ENCODE measurements at regions of chr19 and their contacts with region 1.

Region 1: DNA sequence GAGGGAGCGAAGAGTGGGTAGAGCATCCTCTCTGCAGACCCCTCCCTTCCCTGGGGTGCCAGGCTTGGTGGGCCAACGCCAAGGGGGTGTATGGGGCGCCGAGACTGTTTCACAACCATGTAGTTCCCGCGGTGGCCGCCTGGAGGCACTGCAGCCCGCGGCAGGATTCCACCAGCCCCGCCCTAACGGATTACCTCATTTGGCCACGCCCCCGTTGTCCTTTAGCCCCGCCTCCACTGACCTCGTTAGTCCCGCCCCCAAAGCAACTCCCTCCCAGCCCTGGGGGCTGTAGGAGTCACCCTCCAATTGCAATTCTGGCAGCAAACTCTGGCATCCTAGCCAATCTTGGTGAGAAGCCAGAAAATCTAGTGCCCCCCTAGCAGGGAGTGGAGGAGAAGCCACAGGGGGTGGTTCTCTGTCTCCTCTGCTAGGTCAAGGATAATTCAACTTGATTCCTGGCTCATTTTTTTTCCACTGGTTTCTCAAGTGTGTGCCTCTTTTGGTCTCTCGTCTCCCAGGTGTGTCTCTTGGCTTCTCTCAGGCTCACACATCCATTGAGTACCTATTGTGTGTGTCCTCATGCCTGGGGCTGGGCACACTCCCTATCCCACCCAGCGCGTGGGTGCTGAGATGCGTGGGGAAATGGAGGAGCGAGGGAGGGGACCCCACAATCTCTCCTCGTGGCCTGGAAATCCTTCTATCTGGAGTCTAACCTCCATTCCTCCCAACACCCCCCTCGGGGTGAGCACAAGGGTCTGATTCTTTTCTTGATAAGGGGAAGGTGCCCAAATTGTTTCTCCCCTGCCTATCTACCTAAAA is 2.0 kb downstream of the OLFM2 start:
- DNase-seq: peak; percentile 80
- H3K4me3 ChIP-seq: no peak overlapping the region
- H3K27ac ChIP-seq: no peak overlapping the region
- H3K4me1 ChIP-seq: peaks cover 0 to 36% (median 20%) of the 10 kb centered on the region in 4 donors
- H3K27me3 ChIP-seq: peaks cover 29 to 63% (median 42%) of the 10 kb centered on the region in 3 donors
- CTCF ChIP-seq: peak; percentile 69 to 80 (median 73)
- EP300 ChIP-seq: no peak
- POLR2A ChIP-seq: no peak

Region 2: DNA sequence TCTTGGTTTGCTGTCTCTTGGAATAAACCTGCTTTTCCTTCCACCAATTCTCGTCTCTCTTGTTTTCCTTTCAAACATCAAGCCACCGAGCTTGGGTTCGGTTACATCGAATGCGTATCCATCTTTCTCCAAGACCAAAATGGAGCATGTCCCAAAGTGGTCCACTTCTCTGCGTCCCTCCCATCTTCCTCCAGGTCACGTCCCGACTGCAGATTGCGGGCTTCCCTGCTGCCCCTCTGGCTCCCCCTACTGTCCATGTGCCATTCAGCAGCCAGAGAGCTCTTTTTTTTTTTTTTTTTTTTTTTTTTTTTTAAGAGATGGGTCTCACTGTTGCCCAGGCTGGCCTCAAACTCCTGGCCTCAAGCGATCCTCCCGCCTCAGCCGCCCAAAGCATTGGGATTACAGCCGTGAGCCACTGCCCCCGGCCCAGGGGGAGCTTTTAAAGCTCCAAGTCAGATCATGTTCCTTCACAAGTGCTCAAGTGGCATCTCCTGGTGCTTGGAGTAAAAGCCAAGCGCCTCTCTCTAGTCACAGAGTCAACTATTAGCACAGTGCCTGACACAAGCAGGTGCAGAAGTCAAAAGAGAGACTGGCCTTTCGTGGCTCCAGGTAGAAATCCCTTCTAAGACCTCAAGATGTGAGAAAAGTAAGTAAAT is 66.0 kb after region 1 on chr19:
- intact Hi-C with region 1: loop called (anchors 1 kb)
- DNase-seq: peak; percentile 84
- H3K4me3 ChIP-seq: no peak overlapping the region
- H3K27ac ChIP-seq: no peak overlapping the region
- H3K4me1 ChIP-seq: no peaks in the 10 kb centered on the region
- H3K27me3 ChIP-seq: peaks cover 0 to 13% (median 0%) of the 10 kb centered on the region in 3 donors
- CTCF ChIP-seq: peak; percentile 29 to 48 (median 39)
- EP300 ChIP-seq: no peak
- POLR2A ChIP-seq: no peak

Region 3: DNA sequence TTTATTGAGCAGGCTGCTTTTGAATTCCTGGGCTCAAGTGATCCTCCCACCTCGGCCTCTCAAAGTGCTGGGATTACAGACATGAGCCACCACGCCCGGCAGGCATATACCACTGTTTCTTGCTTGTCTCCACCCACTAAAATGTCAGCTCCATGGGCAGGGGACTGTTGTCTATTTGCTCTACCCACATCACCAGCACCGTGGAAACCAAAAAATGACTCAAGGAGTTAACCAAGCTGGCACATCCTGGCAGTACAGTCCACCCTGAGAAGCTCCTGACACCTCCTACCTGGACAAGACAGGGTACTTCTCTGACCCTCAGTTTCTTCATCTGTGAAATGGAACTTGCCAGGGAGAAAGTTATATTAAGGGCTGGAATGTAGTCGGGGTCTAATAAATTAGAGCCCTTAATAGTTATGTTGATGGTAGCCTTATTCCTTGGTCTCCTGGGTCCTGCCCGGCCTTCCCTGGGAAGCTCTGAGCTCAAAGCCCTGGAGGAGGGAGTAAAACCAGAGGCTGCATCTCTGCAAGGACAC is 92.9 kb after region 1 on chr19:
- intact Hi-C with region 1: loop called (anchors 1 kb)
- DNase-seq: no peak
- H3K4me3 ChIP-seq: peak overlapping the region in 1 of 4 donors; percentile 4
- H3K27ac ChIP-seq: no peak overlapping the region
- H3K4me1 ChIP-seq: peaks cover 0 to 7% (median 5%) of the 10 kb centered on the region in 4 donors
- H3K27me3 ChIP-seq: peaks cover 0 to 14% (median 3%) of the 10 kb centered on the region in 3 donors
- CTCF ChIP-seq: no peak
- EP300 ChIP-seq: no peak
- POLR2A ChIP-seq: no peak

Region 4: GRCh38 chr19:10380313-10381102 is 446.2 kb after region 1 on chr19 and contains the start of gene TYK2:
- intact Hi-C with region 1: loop called (anchors 10 kb)
- DNase-seq: peak; percentile 98
- H3K4me3 ChIP-seq: peak within 1 kb of the TSS; percentile 67 to 97 (median 88)
- H3K27ac ChIP-seq: peak within 1 kb of the TSS; percentile 79 to 87 (median 86)
- H3K4me1 ChIP-seq: peaks cover 0 to 14% (median 12%) of the 10 kb centered on the region in 4 donors
- H3K27me3 ChIP-seq: no peaks in the 10 kb centered on the region
- CTCF ChIP-seq: no peak
- EP300 ChIP-seq: no peak
- POLR2A ChIP-seq: peak; percentile 51 to 54
- total RNA-seq, gene TYK2: 36.7 to 125 (median 50.3) TPM